SK-N-SH (cell line): ENCODE measurements at regions of chr11 and their contacts with region 1.

Region 1: GRCh38 chr11:44936525-44936924 is 14.2 kb downstream of the TP53I11 start:
- DNase-seq: peak; percentile 91
- H3K4me3 ChIP-seq: peak overlapping the region in 1 of 2 experiments; percentile 44; a peak in 1 of 4 replicates
- H3K27ac ChIP-seq: no peak overlapping the region
- H3K4me1 ChIP-seq: peaks cover 0 to 6% of the 10 kb centered on the region in 2 experiments; a peak in 1 of 4 replicates
- H3K27me3 ChIP-seq: no peaks in the 10 kb centered on the region
- CTCF ChIP-seq: peak; percentile 89
- EP300 ChIP-seq: no peak
- RAD21 ChIP-seq: peak; percentile 95

Region 2: GRCh38 chr11:44950625-44951476 is 14.3 kb after region 1 on chr11 and contains the start of gene TP53I11:
- CTCF ChIA-PET with region 1: interaction called, 86 read pairs
- POLR2A ChIA-PET with region 1: interaction called, 4 read pairs
- DNase-seq: peak; percentile 94
- H3K4me3 ChIP-seq: peak within 1 kb of the TSS; percentile 77 to 88
- H3K27ac ChIP-seq: peak within 1 kb of the TSS in 1 of 2 experiments; percentile 43; a peak in 1 of 4 replicates
- H3K4me1 ChIP-seq: peaks cover 4% of the 10 kb centered on the region in 2 experiments; a peak in 2 of 4 replicates
- H3K27me3 ChIP-seq: no peaks in the 10 kb centered on the region
- CTCF ChIP-seq: peak; percentile 67
- EP300 ChIP-seq: no peak
- RAD21 ChIP-seq: no peak
- polyA plus RNA-seq, gene TP53I11: 6.0 and 6.6 TPM in 2 replicates

Region 3: GRCh38 chr11:45042557-45042956 is 106.0 kb after region 1 on chr11:
- CTCF ChIA-PET with region 1: interaction called, 28 read pairs
- POLR2A ChIA-PET with region 1: no interaction called
- DNase-seq: peak; percentile 54
- H3K4me3 ChIP-seq: no peak overlapping the region
- H3K27ac ChIP-seq: no peak overlapping the region
- H3K4me1 ChIP-seq: peaks cover 10 to 28% of the 10 kb centered on the region in 2 experiments; a peak in 3 of 4 replicates
- H3K27me3 ChIP-seq: peaks cover 6% of the 10 kb centered on the region; the same call in 1 of the 2 replicates
- CTCF ChIP-seq: no peak
- EP300 ChIP-seq: no peak
- RAD21 ChIP-seq: no peak

Region 4: GRCh38 chr11:45079943-45080719 is 143.6 kb after region 1 on chr11:
- CTCF ChIA-PET with region 1: interaction called, 15 read pairs
- POLR2A ChIA-PET with region 1: no interaction called
- DNase-seq: no peak
- H3K4me3 ChIP-seq: no peak overlapping the region
- H3K27ac ChIP-seq: no peak overlapping the region
- H3K4me1 ChIP-seq: peaks cover 3 to 25% of the 10 kb centered on the region in 2 experiments; a peak in 2 of 4 replicates
- H3K27me3 ChIP-seq: peaks cover 4% of the 10 kb centered on the region
- CTCF ChIP-seq: no peak
- EP300 ChIP-seq: no peak
- RAD21 ChIP-seq: no peak

Region 5: DNA sequence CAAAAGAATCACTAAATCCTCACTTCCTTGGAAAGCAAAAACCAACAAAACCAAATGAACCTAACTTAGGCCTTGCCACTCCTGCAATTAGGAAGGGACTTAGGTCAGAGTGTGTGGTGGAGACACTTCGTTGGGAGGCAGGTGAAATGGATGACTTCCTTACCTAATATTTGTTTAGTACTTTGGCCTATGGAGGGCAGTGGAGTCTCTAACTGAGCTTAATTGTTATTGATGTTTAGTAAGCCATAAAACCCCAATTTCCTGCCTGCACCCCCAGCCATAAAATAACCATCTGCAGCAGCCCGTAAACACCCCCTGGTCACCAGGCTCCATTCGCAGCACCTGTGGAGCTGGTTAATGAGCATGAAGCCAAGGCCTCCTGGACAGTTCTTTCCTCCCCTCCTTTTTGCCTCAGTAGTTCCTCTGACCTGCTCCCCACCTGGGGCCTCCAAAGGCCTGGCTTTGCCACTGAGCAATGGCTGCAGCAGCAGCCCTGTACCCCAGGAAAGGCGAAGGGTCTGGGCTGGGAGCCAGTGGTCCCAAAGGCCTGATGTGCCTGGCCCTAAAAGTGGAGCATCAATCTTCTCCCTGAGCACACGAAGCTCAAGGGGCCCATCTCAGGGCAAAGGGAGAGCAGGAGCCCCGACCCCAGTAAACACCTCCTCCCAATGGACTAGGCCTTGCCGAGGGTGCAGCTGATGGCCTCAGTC is 365.2 kb after region 1 on chr11:
- CTCF ChIA-PET with region 1: interaction called, 11 read pairs
- POLR2A ChIA-PET with region 1: no interaction called
- DNase-seq: no peak
- H3K4me3 ChIP-seq: no peak overlapping the region
- H3K27ac ChIP-seq: no peak overlapping the region
- H3K4me1 ChIP-seq: no peaks in the 10 kb centered on the region
- H3K27me3 ChIP-seq: peaks cover 37% of the 10 kb centered on the region
- CTCF ChIP-seq: no peak
- EP300 ChIP-seq: no peak
- RAD21 ChIP-seq: no peak

Region 6: DNA sequence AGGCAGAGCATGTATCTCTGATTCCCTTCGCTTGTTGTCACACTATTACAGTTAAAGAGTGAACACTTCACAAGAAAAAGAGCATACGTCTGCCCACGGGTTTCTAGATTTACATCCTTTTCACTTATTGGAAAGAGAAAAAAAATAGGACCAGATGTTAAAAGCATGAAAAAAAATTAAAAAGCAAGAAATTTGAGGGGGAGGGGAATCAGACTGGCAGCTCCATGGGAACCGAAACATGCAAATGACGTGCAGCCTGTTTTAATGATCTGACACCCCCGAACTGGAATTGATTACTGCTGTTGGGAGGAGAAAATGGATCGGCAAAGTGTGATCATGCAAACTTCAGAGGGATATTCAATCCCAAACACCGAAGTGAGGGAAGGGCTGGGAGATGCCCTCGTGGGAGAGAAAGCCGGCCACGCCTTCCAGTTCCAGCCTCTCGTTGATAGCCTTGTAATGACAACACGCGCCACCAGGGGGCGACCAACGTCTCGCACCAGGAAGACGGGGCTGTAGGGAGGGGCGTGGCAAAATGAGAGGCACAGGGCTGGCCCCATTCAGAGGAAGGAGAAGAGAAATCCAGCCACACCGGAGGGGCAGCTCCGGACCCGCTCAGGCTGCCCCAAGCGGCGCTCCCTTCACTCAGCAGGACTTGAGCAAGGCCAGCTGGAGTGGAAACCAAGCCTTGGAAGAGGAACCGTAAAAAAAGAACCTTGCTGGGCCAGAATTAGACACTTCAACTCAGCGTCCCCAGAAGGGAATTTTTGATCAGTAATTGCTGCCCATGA is 403.4 kb after region 1 on chr11:
- CTCF ChIA-PET with region 1: interaction called, 16 read pairs
- POLR2A ChIA-PET with region 1: no interaction called
- DNase-seq: peak; percentile 90
- H3K4me3 ChIP-seq: peak overlapping the region in 1 of 2 experiments; percentile 22; a peak in 2 of 4 replicates
- H3K27ac ChIP-seq: no peak overlapping the region
- H3K4me1 ChIP-seq: peaks cover 0 to 8% of the 10 kb centered on the region in 2 experiments; a peak in 2 of 4 replicates
- H3K27me3 ChIP-seq: peaks cover 37% of the 10 kb centered on the region; the same call in 1 of the 2 replicates
- CTCF ChIP-seq: peak; percentile 83
- EP300 ChIP-seq: no peak
- RAD21 ChIP-seq: peak; percentile 67